ENCODE measurements at regions of chr6 and their contacts with region 1.

Region 1: GRCh38 chr6:24699521-24700359 is 19.2 kb downstream of the C6orf62 start:
- DNase-seq: no peak
- ATAC-seq: peak; percentile 89
- H3K4me3 Mint-ChIP-seq: no peak overlapping the region
- H3K27ac Mint-ChIP-seq: peak overlapping the region; percentile 89
- H3K4me1 Mint-ChIP-seq: peaks cover 68% of the 10 kb centered on the region
- H3K27me3 Mint-ChIP-seq: no peaks in the 10 kb centered on the region

Region 2: DNA sequence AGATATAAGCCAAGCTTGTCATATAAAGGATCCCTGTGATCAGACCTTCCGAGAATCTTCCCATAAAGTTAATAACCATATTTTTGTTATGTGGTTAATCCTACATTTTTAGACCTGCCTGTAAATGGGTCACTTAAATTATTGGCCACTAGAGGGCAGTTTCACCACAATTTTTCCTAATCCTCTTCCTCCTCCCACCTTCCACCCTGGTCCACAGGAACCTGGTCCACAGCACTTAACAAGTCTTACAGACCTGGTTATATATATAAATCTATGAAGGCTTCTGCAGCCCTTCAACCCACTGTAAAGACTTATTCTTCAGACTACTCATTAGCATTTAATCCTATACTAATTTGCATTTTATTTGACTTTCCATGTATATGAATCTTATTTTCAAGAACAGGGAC is 268.7 kb before region 1 on chr6:
- CTCF ChIA-PET with region 1: no interaction called
- POLR2A ChIA-PET with region 1: no interaction called
- intact Hi-C with region 1: loop called in 1 of 2 experiments (anchors 5 kb)
- DNase-seq: no peak
- ATAC-seq: no peak
- H3K4me3 Mint-ChIP-seq: no peak overlapping the region
- H3K27ac Mint-ChIP-seq: no peak overlapping the region
- H3K4me1 Mint-ChIP-seq: no peaks in the 10 kb centered on the region
- H3K27me3 Mint-ChIP-seq: no peaks in the 10 kb centered on the region

Region 3: GRCh38 chr6:24646782-24647181 is 53.0 kb before region 1 on chr6:
- CTCF ChIA-PET with region 1: interaction called, 3 read pairs
- POLR2A ChIA-PET with region 1: no interaction called
- intact Hi-C with region 1: loop called in 1 of 2 experiments (anchors 5 kb)
- DNase-seq: no peak
- ATAC-seq: peak; percentile 24
- H3K4me3 Mint-ChIP-seq: peak overlapping the region; percentile 78
- H3K27ac Mint-ChIP-seq: peak overlapping the region; percentile 19
- H3K4me1 Mint-ChIP-seq: peaks cover 14% of the 10 kb centered on the region
- H3K27me3 Mint-ChIP-seq: peaks cover 11% of the 10 kb centered on the region

Region 4: GRCh38 chr6:24720604-24721460 is 21.1 kb after region 1 on chr6:
- CTCF ChIA-PET with region 1: interaction called, 8 read pairs
- POLR2A ChIA-PET with region 1: interaction called, 7 read pairs
- intact Hi-C with region 1: loop called (anchors 1 to 2 kb)
- DNase-seq: peak; percentile 100
- ATAC-seq: peak; percentile 88
- H3K4me3 Mint-ChIP-seq: peak overlapping the region; percentile 99
- H3K27ac Mint-ChIP-seq: peak overlapping the region; percentile 98
- H3K4me1 Mint-ChIP-seq: peaks cover 32% of the 10 kb centered on the region
- H3K27me3 Mint-ChIP-seq: no peaks in the 10 kb centered on the region

Region 5: DNA sequence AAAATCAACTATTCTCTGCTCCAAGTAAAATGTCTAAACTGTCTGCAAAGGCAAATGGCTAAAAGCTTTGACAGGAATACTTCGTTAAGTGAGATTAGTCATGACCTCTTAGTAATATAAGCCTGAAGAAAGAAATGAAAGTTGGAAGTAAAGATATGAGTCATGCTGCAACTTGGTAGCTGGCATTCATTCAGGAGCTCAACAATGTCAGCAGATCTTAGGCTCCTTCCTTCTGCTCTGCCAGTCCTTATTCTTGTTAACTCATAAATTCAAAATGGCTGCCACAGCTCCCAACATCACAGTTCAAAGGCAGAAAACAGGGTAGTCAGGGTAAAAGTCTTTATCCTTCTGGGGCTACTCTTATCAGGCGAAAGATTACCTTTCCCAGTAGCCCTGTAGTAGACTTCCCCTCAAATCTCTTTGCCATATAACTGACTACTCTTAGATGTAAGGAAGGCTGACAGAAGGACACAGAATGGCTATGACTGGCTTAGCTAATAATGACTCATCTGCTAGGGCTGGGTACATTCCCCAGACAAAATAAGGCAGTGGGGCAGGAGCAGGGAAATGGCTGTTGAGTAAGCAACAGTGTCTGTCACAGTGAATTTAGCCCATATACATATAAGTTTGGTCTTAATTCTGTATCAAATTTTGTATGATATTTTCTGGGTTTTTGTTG is 43.7 kb after region 1 on chr6:
- CTCF ChIA-PET with region 1: interaction called, 3 read pairs
- POLR2A ChIA-PET with region 1: no interaction called
- intact Hi-C with region 1: loop called in 1 of 2 experiments (anchors 2 kb)
- DNase-seq: peak; percentile 61
- ATAC-seq: peak; percentile 94
- H3K4me3 Mint-ChIP-seq: peak overlapping the region; percentile 17
- H3K27ac Mint-ChIP-seq: peak overlapping the region; percentile 82
- H3K4me1 Mint-ChIP-seq: peaks cover 28% of the 10 kb centered on the region
- H3K27me3 Mint-ChIP-seq: no peaks in the 10 kb centered on the region

Region 6: GRCh38 chr6:24766680-24767462 is 67.1 kb after region 1 on chr6:
- CTCF ChIA-PET with region 1: no interaction called
- POLR2A ChIA-PET with region 1: no interaction called
- intact Hi-C with region 1: loop called (anchors 2 to 5 kb)
- DNase-seq: no peak
- ATAC-seq: peak; percentile 76
- H3K4me3 Mint-ChIP-seq: no peak overlapping the region
- H3K27ac Mint-ChIP-seq: no peak overlapping the region
- H3K4me1 Mint-ChIP-seq: no peaks in the 10 kb centered on the region
- H3K27me3 Mint-ChIP-seq: no peaks in the 10 kb centered on the region